ENCODE measurements at regions of chr5 and their contacts with region 1.

Region 1: DNA sequence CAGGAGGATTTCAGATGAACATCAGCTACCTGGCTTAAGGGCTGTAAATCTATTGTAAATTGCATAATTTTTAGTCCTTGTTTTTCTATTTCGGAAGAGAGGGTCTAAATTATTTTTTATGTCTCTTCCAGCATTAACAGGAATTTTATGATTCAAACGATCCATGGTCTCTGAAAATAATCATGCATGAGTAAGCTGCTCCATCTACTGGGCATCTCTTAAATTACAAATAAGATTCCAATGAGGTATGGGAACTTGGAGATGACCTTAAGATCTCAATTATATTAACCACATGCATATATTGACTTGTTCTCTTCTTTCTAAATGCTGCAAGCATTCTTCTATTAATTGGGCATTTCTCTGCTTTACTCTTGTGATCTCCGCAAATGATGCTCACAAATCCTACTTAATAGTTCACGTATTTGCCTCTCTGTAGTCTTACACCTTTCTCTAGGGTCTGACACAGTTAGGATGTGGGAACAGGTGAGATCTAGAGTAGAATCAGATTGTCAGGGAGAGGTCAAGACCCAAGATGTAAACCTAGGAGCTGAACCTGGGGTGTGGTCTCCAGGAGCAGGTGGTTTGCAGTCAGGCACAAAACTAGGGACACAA is 86.9 kb downstream of the NUDT12 start:
- DNase-seq: no peak
- ATAC-seq: peak; percentile 46

Region 2: DNA sequence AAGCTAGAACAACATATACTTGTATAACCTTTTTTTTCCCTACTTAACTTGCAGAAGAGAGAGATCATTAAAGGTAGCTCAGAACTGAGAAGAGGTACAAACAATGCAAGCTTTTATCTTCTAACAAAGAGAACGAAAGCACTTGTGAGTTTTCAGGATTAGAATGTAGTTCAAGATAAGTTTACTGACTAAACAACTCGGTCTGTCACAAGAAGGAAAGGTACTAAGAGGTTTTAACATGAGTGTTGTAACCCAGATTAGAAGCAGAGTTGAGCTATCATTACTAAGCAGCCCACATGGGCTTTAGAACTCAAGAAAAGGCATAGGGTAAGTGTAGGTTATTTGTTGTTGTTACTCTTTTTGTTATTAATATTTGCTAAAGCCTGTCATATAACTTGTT is 381.0 kb before region 1 on chr5:
- intact Hi-C with region 1: no loop called
- DNase-seq: no peak
- ATAC-seq: no peak

Region 3: GRCh38 chr5:103232393-103232999 is 243.2 kb before region 1 on chr5:
- intact Hi-C with region 1: loop called (anchors 2 to 10 kb)
- DNase-seq: no peak
- ATAC-seq: peak; percentile 92

Region 4: GRCh38 chr5:103569313-103570060 is 93.8 kb after region 1 on chr5:
- intact Hi-C with region 1: no loop called
- DNase-seq: no peak
- ATAC-seq: peak; percentile 22

Region 5: DNA sequence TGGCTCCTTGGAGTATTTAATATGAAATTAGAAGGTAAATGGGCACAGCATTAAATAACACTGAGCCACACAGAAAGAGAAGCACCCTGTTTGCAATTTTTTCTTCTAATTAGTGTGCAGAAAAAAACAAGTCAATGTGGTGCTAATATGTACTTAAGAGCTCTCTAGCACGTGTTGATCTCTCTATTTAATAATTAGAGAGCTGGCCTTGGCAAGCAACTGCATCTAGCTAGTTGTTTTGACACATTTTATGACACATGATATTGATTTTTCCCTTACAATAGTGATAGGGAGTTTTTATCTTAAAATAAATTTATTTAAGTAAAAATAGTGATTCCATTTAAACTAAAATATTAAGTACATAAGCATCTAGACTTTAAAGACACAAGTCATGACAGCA is 141.4 kb after region 1 on chr5:
- intact Hi-C with region 1: no loop called
- DNase-seq: no peak
- ATAC-seq: no peak